Activated B cell treated with CpG ODN at 0.5 μM for 24 hours (primary cell): ENCODE measurements at regions of chr14 and their contacts with region 1.

Region 1: GRCh38 chr14:68476212-68476907 is 316.5 kb downstream of the ZFP36L1 start:
- DNase-seq: peak; percentile 40
- ATAC-seq: peak; percentile 83
- H3K4me3 Mint-ChIP-seq: peak overlapping the region; percentile 62
- H3K27ac Mint-ChIP-seq: peak overlapping the region; percentile 99
- H3K4me1 Mint-ChIP-seq: peaks cover 89% of the 10 kb centered on the region
- H3K27me3 Mint-ChIP-seq: no peaks in the 10 kb centered on the region
- CTCF ChIP-seq: no peak

Region 2: DNA sequence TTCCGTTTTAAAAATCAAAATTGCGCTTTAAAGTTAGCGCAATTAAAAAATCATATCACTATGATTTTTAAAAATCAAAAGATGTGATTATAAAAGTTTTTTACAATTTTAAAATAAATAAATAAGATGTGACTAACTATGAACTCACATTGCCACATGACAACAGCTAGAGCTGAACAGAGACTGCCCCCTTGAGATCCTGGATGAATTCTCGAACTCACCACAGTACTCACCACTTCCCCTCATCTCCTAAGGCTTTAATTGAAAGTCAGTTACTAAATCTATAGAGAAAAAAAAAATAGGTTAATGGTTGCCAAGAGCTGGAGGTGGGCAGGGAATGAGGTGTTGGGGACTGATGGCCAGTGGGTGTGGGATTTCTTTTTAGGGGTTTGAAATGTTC is 67.7 kb before region 1 on chr14:
- CTCF ChIA-PET with region 1: interaction called, 3 read pairs
- POLR2A ChIA-PET with region 1: interaction called, 14 read pairs
- intact Hi-C with region 1: loop called (anchors 2 kb)
- DNase-seq: no peak
- ATAC-seq: peak; percentile 53
- H3K4me3 Mint-ChIP-seq: peak overlapping the region; percentile 16
- H3K27ac Mint-ChIP-seq: peak overlapping the region; percentile 80
- H3K4me1 Mint-ChIP-seq: peaks cover 75% of the 10 kb centered on the region
- H3K27me3 Mint-ChIP-seq: no peaks in the 10 kb centered on the region
- CTCF ChIP-seq: no peak

Region 3: DNA sequence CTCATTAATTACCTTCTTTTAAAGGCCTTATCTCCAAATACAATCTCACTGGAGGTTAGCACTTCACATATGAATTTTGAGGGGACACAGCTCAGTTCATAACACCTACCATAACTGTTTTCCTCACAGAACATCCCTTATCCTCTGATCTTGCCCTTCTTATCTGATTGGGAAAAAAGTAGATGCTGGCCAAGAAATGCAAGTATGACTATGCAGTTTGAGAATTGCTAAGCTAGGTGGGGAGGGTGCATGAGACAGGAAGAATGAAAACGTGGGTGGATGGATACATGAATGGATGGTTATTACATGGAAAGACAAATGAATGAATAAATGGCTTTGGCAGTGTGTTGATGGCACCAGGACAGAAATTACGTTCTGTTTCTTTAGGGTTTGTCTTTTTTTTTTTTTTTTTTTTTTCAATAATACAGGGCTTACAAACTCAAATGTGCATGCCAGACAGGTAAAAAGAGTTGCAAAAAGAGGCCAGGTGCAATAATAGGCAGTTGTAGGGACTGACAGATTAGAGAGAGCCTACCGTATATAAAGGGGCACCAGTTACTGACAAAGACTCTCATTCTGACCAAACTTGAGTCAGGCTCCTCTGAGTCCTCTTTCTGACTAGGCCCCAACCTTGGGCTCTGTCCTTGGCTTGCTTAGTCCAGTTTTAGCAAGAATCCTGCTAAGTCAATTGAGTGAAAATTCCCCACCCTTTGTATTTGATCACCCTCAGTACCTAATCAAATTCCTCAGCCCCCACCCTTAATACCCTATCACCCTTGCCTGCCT is 11.6 kb after region 1 on chr14:
- CTCF ChIA-PET with region 1: interaction called, 3 read pairs
- POLR2A ChIA-PET with region 1: interaction called, 92 read pairs
- intact Hi-C with region 1: no loop called
- DNase-seq: no peak
- ATAC-seq: no peak
- H3K4me3 Mint-ChIP-seq: no peak overlapping the region
- H3K27ac Mint-ChIP-seq: no peak overlapping the region
- H3K4me1 Mint-ChIP-seq: peaks cover 45% of the 10 kb centered on the region
- H3K27me3 Mint-ChIP-seq: no peaks in the 10 kb centered on the region
- CTCF ChIP-seq: no peak

Region 4: DNA sequence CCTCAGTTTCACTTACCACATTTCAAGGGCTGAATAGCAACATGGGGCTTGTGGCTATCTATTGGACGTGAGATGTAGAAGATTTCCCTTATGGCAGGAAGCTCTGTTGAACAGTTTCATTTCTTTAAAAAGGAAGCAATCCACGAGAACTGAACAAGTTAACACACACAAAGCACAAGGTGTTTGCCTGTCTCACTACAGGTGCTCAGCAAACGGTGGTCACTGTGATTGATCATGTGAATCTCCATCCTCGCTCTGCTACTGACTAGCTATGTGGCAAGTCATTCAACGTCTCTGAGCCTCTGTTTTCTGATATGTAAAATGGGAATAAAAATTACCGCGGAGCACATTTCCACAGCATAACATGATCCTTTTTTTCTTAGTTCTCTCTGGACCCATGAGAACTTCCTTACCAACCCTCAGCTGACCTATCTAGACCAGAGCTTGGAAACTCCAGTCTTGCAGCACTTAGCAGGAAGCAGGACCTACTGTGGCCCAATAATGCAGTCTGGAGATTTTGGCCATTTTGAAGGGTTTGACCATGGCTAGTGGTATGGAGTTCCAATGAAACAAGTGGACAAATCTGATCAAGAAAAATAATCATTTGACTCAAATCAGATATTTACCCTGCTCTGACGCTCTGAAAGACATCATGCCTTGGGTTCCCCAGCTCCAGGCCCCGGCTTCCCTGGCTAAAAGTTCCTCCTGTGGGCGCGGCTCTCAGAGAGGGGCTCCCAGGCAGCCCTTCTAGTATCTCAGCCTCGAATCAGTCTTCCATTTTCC is 37.7 kb after region 1 on chr14:
- CTCF ChIA-PET with region 1: no interaction called
- POLR2A ChIA-PET with region 1: interaction called, 20 read pairs
- intact Hi-C with region 1: loop called (anchors 1 kb)
- DNase-seq: no peak
- ATAC-seq: peak; percentile 84
- H3K4me3 Mint-ChIP-seq: peak overlapping the region; percentile 64
- H3K27ac Mint-ChIP-seq: peak overlapping the region; percentile 94
- H3K4me1 Mint-ChIP-seq: peaks cover 66% of the 10 kb centered on the region
- H3K27me3 Mint-ChIP-seq: no peaks in the 10 kb centered on the region
- CTCF ChIP-seq: no peak